GM10248 (cell line): ENCODE measurements at regions of chr2 and their contacts with region 1.

Region 1: DNA sequence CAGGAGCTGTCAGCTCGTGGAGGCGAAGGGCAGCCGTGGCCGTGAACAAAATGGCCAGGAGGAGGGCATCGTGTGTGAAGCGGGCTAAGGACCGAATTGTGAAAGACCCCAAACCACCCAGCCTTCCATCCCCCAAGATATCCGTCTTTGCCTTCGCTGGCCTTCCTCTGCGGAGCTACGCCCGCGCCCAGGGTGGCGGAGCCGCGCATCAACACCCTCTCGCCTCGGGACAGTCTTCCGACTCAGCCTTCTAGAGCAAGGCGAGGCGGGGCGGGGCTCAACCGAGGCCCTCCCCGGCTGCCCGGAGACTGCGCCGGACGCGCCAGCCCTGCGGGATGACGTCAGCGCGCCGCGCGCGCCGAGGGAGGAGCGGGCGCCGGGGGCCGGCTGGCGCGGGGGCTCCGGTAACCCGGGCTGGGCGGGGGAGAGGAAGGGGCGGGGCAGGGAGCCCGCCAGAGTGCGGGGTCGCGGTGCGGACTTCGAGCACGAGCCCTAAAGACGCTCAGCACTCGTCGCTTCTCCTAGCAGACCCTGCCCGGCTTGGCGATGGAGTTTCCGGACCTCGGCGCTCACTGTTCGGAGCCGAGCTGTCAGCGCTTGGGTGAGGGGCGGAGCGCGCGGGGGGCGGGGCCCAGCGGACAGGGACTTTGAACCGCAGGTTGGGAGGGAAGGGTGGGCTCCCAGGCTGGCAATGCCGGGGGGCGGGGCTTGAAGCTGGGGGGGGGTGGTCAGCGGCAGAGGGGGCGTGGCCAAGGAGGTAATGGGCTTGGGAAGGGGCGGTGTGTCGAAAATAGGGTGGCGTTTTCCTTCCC is at the start of gene ZFAND2B:
- DNase-seq: peak; percentile 99
- CTCF ChIP-seq: no peak

Region 2: GRCh38 chr2:219160186-219161017 is 46.2 kb before region 1 on chr2 and contains the start of gene NHEJ1:
- CTCF ChIA-PET with region 1: interaction called, 10 read pairs
- POLR2A ChIA-PET with region 1: interaction called, 5 read pairs
- DNase-seq: peak; percentile 97
- CTCF ChIP-seq: peak; percentile 94

Region 3: GRCh38 chr2:219171231-219171651 is 35.4 kb before region 1 on chr2:
- CTCF ChIA-PET with region 1: interaction called, 15 read pairs
- POLR2A ChIA-PET with region 1: interaction called, 12 read pairs
- DNase-seq: peak; percentile 46
- CTCF ChIP-seq: peak; percentile 59

Region 4: GRCh38 chr2:219177552-219178376 is 28.9 kb before region 1 on chr2 and contains the start of gene RETREG2:
- CTCF ChIA-PET with region 1: interaction called, 15 read pairs
- POLR2A ChIA-PET with region 1: interaction called, 12 read pairs
- DNase-seq: peak; percentile 98
- CTCF ChIP-seq: peak; percentile 71

Region 5: GRCh38 chr2:219253753-219254590 is 47.3 kb after region 1 on chr2 and contains the start of gene TUBA4A:
- CTCF ChIA-PET with region 1: interaction called, 5 read pairs
- POLR2A ChIA-PET with region 1: interaction called, 16 read pairs
- DNase-seq: peak; percentile 98
- CTCF ChIP-seq: no peak